Activated CD4-positive, alpha-beta memory T cell treated with anti-CD3 and anti-CD28 coated beads, Interleukin-2, amount 10 ng/mL, durations not matched to agents 7 days and 5 days (primary cell): ENCODE measurements at regions of chr1 and their contacts with region 1.

Region 1: GRCh38 chr1:222643938-222644635 is 26.2 kb downstream of the MIA3 start:
- DNase-seq: peak; percentile 98
- H3K4me3 Mint-ChIP-seq: peak overlapping the region; percentile 99
- H3K27ac Mint-ChIP-seq: peak overlapping the region; percentile 88
- H3K4me1 Mint-ChIP-seq: peaks cover 27% of the 10 kb centered on the region
- H3K27me3 Mint-ChIP-seq: no peaks in the 10 kb centered on the region

Region 2: GRCh38 chr1:222589462-222590302 is 54.4 kb before region 1 on chr1 and contains the start of gene TAF1A:
- CTCF ChIA-PET with region 1: no interaction called
- POLR2A ChIA-PET with region 1: interaction called, 20 read pairs
- DNase-seq: peak; percentile 89
- H3K4me3 Mint-ChIP-seq: peak within 1 kb of the TSS; percentile 93
- H3K27ac Mint-ChIP-seq: peak within 1 kb of the TSS; percentile 87
- H3K4me1 Mint-ChIP-seq: peaks cover 42% of the 10 kb centered on the region
- H3K27me3 Mint-ChIP-seq: no peaks in the 10 kb centered on the region
- total RNA-seq, gene TAF1A: 9.1 to 10.0 TPM

Region 3: GRCh38 chr1:222617367-222617951 is 26.6 kb before region 1 on chr1:
- CTCF ChIA-PET with region 1: interaction called, 3 read pairs
- POLR2A ChIA-PET with region 1: interaction called, 19 read pairs
- DNase-seq: peak; percentile 92
- H3K4me3 Mint-ChIP-seq: peak overlapping the region; percentile 77
- H3K27ac Mint-ChIP-seq: peak overlapping the region; percentile 67
- H3K4me1 Mint-ChIP-seq: peaks cover 24% of the 10 kb centered on the region
- H3K27me3 Mint-ChIP-seq: peaks cover 30% of the 10 kb centered on the region

Region 4: GRCh38 chr1:222654849-222655248 is 10.8 kb after region 1 on chr1:
- CTCF ChIA-PET with region 1: interaction called, 5 read pairs
- POLR2A ChIA-PET with region 1: interaction called, 63 read pairs
- DNase-seq: peak; percentile 74
- H3K4me3 Mint-ChIP-seq: no peak overlapping the region
- H3K27ac Mint-ChIP-seq: peak overlapping the region; percentile 73
- H3K4me1 Mint-ChIP-seq: peaks cover 56% of the 10 kb centered on the region
- H3K27me3 Mint-ChIP-seq: no peaks in the 10 kb centered on the region

Region 5: DNA sequence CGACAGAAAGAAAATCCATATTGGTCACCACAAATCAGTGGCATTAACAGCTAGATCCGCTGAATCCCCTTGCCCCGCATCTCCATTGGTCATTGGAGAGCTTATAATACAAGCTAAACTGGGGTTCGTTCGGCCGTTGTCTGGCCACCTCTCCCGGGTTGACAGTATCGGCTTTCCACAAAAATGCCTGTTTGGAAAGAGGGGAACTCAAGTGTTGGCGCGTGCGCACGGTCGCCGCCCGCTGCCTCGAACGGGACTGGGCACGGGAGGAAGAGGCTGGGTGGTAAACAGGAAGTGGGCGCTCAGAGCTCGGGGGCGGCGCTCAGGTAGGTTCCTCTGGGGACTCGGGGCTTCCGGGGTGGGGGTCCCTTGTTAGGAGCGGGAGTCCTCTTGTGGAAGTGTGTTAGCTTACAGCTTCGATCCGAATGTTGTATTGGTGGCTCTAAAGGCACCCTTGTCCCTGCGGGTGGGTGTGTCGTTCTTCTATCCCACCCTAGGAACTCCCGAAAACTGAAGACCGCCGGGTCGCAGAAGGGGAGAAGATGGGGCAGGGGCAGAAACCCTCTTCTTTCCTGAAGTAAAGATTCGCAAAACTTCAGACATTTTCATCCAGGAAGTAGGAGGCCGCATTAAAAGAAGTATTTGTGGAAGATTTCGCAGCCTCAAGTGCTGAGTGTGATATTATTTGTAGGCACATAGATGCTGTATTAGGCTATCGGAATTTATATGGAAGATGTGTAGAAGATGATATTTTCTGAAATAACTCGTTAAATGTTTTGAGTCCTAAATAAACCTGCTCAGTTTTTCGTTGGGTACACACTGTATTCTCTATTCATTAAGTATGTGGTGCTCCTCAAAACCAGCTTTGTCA is 69.2 kb after region 1 on chr1:
- CTCF ChIA-PET with region 1: interaction called, 5 read pairs
- POLR2A ChIA-PET with region 1: interaction called, 79 read pairs
- DNase-seq: peak; percentile 90
- H3K4me3 Mint-ChIP-seq: peak overlapping the region; percentile 99
- H3K27ac Mint-ChIP-seq: peak overlapping the region; percentile 99
- H3K4me1 Mint-ChIP-seq: peaks cover 54% of the 10 kb centered on the region
- H3K27me3 Mint-ChIP-seq: no peaks in the 10 kb centered on the region